Activated T-helper 2 cell treated with anti-CD3 and anti-CD28 coated beads, Interferon-gamma antibody, Interleukin-2, Interleukin-4, amounts not matched to agents 10 μg/mL and 5 μg/mL and 100 μg/mL, durations not matched to agents 14 hours and 24 hours and 36 hours (primary cell): ENCODE measurements at regions of chr9 and their contacts with region 1.

Region 1: GRCh38 chr9:125700791-125701190 is 6.2 kb downstream of the MAPKAP1 start:
- DNase-seq: no peak
- H3K4me3 Mint-ChIP-seq: no peak overlapping the region
- H3K27ac Mint-ChIP-seq: peak overlapping the region; percentile 61
- H3K4me1 Mint-ChIP-seq: peaks cover 39% of the 10 kb centered on the region
- H3K27me3 Mint-ChIP-seq: no peaks in the 10 kb centered on the region

Region 2: GRCh38 chr9:125663127-125663526 is 37.7 kb before region 1 on chr9:
- intact Hi-C with region 1: loop called (anchors 5 kb)
- DNase-seq: no peak
- H3K4me3 Mint-ChIP-seq: no peak overlapping the region
- H3K27ac Mint-ChIP-seq: no peak overlapping the region
- H3K4me1 Mint-ChIP-seq: peaks cover 11% of the 10 kb centered on the region
- H3K27me3 Mint-ChIP-seq: no peaks in the 10 kb centered on the region

Region 3: DNA sequence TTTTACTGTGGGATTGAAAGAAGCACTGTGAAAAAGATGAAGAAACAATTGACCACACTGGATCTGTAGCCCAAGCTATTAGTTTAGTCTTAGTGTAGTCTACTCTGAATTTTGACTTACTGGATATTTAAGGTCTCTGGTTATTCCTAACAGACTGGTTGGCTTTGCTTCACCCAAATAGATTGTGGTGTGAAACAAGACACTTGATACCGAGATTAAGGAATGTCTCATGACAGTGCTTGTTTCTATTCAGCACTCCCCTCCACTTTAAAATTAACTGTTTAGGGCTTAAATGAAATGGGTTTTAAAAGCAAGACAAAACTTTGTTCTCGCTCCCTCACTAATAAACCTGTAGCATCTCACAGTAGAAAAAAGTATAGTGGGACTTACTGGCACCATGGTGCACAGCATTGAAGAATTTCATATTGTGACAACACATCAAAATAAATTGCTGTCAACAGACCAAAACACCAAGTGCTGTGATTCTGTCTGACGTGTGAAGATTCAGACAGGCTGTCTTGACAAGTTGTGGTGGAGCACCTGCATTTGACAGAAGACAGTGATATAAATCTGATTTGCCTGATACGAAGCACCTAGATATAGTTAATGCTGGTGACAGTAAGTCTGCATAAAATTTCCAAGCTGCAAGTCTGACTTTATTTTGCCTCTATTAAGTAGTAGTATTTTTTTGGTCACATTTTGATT is 119.5 kb after region 1 on chr9:
- intact Hi-C with region 1: no loop called
- DNase-seq: no peak
- H3K4me3 Mint-ChIP-seq: no peak overlapping the region
- H3K27ac Mint-ChIP-seq: no peak overlapping the region
- H3K4me1 Mint-ChIP-seq: peaks cover 18% of the 10 kb centered on the region
- H3K27me3 Mint-ChIP-seq: peaks cover 2% of the 10 kb centered on the region